K562 (cell line): ENCODE measurements at regions of chr13 and their contacts with region 1.

Region 1: DNA sequence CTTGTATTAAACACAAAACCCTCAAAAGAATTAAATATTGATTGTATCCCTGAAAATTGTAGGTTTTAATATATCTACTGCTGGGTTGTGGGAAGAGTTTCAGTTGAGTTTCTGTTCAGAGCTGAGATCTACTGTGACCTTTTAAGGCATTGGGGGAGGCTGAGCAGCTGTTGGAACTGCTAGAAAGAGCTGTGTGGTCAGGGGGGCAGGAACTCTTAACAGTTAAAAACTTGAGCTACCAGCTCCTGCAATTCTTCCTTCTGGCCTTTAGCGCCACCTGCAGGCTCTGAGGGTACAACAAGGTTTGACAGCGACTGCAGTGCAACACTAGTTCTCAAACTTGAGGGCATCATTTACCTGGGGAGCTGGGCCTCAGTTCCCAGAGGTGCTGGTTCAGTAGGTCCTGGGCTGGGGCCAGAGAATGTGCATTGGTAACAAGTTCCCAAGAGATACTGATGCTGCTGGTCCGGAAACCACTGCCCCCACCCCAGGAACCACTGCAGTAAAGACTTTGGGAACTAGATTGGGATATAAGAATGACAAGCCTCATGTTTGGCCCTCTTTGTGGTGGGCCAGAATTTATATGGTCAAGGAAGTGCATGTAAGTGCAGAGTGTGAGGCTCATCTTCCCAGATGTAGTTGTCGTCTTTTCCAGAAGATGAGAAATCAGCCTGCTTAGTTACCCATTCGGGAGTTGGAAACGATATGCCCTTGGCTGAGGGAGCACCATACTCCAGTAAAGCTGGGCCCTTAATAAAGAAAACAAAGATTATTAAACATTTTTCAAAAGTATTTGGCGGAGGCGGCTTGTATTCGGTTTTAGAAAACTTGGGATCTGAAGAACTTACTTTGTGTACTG is 2.6 kb downstream of the RNASEH2B start:
- DNase-seq: peak; percentile 58 to 91 (median 66)
- ATAC-seq: peak; percentile 67
- H3K4me3 ChIP-seq: peak overlapping the region; percentile 73; the same call in 1 of the 2 replicates
- H3K27ac ChIP-seq: peak overlapping the region; percentile 97
- H3K4me1 ChIP-seq: peaks cover 24 to 38% of the 10 kb centered on the region in 2 experiments
- H3K27me3 ChIP-seq: no peaks in the 10 kb centered on the region
- CTCF ChIP-seq: peak; percentile 67 to 80 (median 78)
- EP300 ChIP-seq: peak; percentile 80
- POLR2A ChIP-seq: no peak
- RAD21 ChIP-seq: peak; percentile 74 to 76

Region 2: DNA sequence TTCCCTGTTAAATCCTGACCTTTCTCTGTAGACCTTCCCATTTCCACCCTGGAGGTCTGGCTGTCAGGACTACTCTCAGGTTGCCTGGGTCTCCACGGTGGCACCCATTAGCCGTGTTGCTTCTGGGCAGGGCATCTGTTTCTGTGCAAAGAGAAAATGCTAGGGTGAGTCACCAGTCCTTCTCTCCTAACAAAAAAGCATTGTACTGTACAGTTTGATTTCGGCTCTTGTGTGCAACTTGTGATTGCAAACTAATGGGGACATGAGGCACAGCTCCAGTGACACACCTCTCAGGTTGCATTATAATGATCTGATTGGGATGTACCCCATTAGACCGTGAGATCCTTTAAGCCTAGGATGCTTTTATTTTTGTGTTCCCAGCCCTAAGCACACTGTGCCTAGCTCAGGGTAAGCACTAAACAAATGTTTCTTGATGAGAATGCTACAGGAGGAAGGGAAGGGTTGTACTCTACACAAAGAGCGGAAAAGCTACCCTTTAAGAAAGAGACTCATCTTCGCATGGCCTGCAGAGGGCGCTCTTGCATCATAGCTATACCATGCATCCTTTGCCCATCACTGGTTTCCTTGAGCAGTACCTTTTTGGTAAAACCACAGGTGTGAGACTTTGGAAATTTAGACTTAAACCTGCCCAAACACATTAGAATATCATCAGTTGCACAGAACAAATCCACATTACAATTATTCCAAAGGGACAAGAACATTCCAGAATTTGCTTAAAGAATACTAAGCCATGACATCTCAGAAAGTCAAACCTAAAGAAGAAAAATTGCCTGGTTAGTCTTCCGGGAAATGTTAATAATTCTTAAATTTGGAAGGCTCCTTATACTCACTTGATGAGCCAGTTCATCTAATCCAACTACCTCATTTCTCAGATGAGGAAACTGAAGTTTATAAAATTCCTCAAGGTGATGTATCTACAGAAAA is 935.6 kb before region 1 on chr13:
- CTCF ChIA-PET with region 1: interaction called, 6 read pairs
- POLR2A ChIA-PET with region 1: no interaction called
- in situ Hi-C with region 1: no loop called
- intact Hi-C with region 1: loop called (anchors 5 kb)
- DNase-seq: peak; percentile 59 to 77 (median 62)
- ATAC-seq: peak; percentile 90
- H3K4me3 ChIP-seq: no peak overlapping the region
- H3K27ac ChIP-seq: no peak overlapping the region
- H3K4me1 ChIP-seq: no peaks in the 10 kb centered on the region; a peak in 3 of 5 replicates
- H3K27me3 ChIP-seq: no peaks in the 10 kb centered on the region
- CTCF ChIP-seq: peak; percentile 67 to 82 (median 80)
- EP300 ChIP-seq: no peak
- POLR2A ChIP-seq: no peak
- RAD21 ChIP-seq: peak; percentile 76 to 90

Region 3: DNA sequence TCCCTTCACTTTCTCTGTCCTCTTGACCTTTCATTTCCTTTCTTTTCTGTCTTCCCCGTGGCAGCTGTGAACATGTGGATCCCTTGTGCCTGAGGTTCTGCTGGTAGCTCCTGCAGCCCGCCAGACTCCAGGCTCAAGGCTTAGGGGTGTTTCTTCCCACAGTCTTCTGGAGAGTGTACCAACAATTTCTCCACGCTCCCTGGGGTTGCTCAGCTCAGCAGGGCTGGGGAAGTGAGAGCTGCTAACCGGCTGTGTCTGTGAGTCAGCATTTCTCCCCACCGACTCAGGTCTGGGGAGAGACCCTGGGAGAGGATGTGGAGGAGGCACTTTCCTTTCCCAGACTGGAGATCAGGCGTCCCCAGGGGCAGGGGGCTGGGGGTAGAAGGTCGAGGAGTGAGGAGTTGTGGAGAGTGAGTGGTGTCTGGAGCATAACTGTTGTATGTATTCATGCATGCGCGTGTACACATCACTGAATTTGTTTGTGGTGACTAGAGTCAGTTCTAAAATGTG is 703.3 kb before region 1 on chr13:
- CTCF ChIA-PET with region 1: no interaction called
- POLR2A ChIA-PET with region 1: no interaction called
- in situ Hi-C with region 1: no loop called
- intact Hi-C with region 1: loop called (anchors 10 kb)
- DNase-seq: peak; percentile 50 to 89 (median 68)
- ATAC-seq: peak; percentile 99
- H3K4me3 ChIP-seq: peak overlapping the region; percentile 17
- H3K27ac ChIP-seq: peak overlapping the region; percentile 83
- H3K4me1 ChIP-seq: peaks cover 3 to 8% of the 10 kb centered on the region in 2 experiments; a peak in 3 of 5 replicates
- H3K27me3 ChIP-seq: no peaks in the 10 kb centered on the region
- CTCF ChIP-seq: no peak
- EP300 ChIP-seq: no peak; the same call in 1 of the 2 replicates
- POLR2A ChIP-seq: peak; percentile 55
- RAD21 ChIP-seq: no peak; a peak in 1 of 4 replicates

Region 4: DNA sequence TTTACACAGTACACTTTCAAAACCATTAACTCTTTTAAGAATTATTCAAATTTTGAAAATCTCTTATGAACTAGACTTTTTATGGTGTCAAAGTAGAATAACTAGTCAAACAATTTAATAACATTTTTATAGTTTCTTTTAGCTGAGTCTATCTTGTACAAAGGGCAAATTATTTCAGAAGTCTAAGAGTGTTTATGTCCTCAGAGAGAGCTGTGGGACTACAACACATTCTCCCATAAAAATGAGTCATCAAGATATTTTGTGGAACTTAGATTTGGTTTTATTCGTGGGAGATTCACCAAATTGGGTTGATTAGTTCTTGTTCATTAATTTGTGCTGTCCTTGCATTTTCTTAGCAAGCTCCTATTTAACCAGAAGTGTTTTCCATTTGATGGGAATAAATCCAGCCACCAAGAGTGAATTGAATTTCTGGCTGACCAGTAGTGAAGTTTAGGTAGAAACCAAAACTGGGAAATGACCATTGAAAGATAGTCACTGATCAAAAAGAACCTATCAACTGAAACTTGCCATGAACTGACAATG is 359.7 kb before region 1 on chr13:
- CTCF ChIA-PET with region 1: no interaction called
- POLR2A ChIA-PET with region 1: no interaction called
- in situ Hi-C with region 1: no loop called
- intact Hi-C with region 1: loop called (anchors 10 kb)
- DNase-seq: no peak
- ATAC-seq: no peak
- H3K4me3 ChIP-seq: no peak overlapping the region
- H3K27ac ChIP-seq: no peak overlapping the region
- H3K4me1 ChIP-seq: no peaks in the 10 kb centered on the region
- H3K27me3 ChIP-seq: no peaks in the 10 kb centered on the region
- CTCF ChIP-seq: no peak
- EP300 ChIP-seq: no peak
- POLR2A ChIP-seq: no peak
- RAD21 ChIP-seq: no peak

Region 5: DNA sequence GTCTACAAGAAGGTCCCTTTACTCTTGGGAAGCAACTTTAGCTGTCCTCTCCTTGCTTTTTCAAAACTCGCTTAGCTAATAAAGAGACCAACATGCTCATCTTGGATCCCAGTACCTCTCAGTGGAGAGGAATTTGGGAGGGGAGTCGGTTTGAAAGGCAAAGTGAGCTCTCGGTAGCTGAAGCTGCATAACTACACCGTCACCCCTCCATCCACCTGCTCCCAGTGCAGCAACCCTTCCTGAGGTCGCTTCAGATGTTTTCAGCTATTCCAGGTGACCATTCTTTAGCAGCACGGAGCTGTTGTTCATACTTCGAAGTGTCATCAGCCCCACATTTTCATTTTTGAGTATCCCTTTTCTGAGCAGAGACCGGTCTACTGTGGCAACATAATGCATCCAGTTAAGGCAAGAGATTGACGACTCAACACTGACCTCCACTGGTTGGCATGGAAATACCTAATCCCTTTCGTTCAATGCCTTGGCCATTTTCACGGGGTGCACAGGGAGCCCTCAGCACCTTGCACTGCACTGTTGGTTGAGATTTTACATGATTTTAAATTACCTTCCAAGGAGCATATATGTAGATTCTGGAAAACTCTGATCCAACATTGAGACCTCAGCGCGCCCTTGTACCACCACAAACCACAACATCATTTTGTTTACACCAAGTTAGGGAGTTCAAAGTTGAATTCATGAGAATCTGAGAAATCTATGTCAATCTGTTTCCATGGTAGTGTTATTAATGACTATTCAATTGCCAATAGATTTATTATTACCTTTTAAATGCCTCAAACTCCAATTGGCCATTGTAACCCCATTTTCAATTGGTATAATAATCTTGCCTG is 110.9 kb before region 1 on chr13:
- CTCF ChIA-PET with region 1: interaction called, 3 read pairs
- POLR2A ChIA-PET with region 1: no interaction called
- in situ Hi-C with region 1: no loop called
- intact Hi-C with region 1: loop called (anchors 2 kb)
- DNase-seq: peak; percentile 17 to 71 (median 32)
- ATAC-seq: peak; percentile 94
- H3K4me3 ChIP-seq: no peak overlapping the region
- H3K27ac ChIP-seq: no peak overlapping the region
- H3K4me1 ChIP-seq: no peaks in the 10 kb centered on the region
- H3K27me3 ChIP-seq: no peaks in the 10 kb centered on the region
- CTCF ChIP-seq: peak; percentile 66 to 74 (median 70)
- EP300 ChIP-seq: no peak
- POLR2A ChIP-seq: no peak
- RAD21 ChIP-seq: peak; percentile 85 to 87

Region 6: DNA sequence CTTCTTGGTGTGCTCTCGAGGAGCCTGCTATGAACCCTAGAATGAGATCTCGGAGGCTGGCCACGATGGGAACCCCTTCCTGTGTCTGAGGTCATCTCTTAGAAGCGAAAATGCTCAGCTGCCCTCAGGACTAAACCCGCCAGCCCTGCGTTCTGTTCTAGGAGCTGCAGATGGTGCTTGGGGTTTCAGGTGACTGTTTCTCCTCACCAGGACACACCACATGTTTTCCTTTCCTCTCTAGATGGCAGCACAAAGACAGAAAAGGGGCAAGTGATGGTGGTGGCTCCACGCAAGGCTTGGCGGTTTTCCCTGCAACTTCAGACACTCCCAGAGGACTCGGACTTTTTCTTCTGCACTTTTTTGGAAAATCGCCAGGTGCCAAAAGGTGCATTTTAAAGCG is 57.5 kb after region 1 on chr13:
- CTCF ChIA-PET with region 1: no interaction called
- POLR2A ChIA-PET with region 1: no interaction called
- in situ Hi-C with region 1: no loop called
- intact Hi-C with region 1: no loop called
- DNase-seq: no peak
- ATAC-seq: no peak
- H3K4me3 ChIP-seq: no peak overlapping the region
- H3K27ac ChIP-seq: no peak overlapping the region
- H3K4me1 ChIP-seq: no peaks in the 10 kb centered on the region
- H3K27me3 ChIP-seq: no peaks in the 10 kb centered on the region
- CTCF ChIP-seq: peak in 1 of 3 experiments; percentile 32; a peak in 2 of 6 replicates
- EP300 ChIP-seq: no peak
- POLR2A ChIP-seq: no peak
- RAD21 ChIP-seq: 0 out of 4 replicates have a peak, but pooled peaks of 1 of the 2 experiments have one; percentile 9